Endothelial cell of umbilical vein (primary cell): ENCODE measurements at regions of chr3 and their contacts with region 1.

Region 1: GRCh38 chr3:179604321-179605078 is at the starts of genes MRPL47 and NDUFB5:
- DNase-seq: peak; percentile 97
- H3K4me3 ChIP-seq: peak within 1 kb of the TSS; percentile 59 to 94 (median 77)
- H3K27ac ChIP-seq: peak within 1 kb of the TSS; percentile 84
- H3K4me1 ChIP-seq: peaks cover 14% of the 10 kb centered on the region
- H3K27me3 ChIP-seq: no peaks in the 10 kb centered on the region
- CTCF ChIP-seq: no peak
- POLR2A ChIP-seq: peak; percentile 94
- total RNA-seq, gene MRPL47: 47.0 and 51.2 TPM in 2 replicates
- total RNA-seq, gene NDUFB5: 68.3 and 74.9 TPM in 2 replicates

Region 2: GRCh38 chr3:179347345-179348194 is 256.9 kb before region 1 on chr3 and contains the start of gene MFN1:
- CTCF ChIA-PET with region 1: no interaction called
- POLR2A ChIA-PET with region 1: no interaction called
- dilution Hi-C with region 1: no loop called
- intact Hi-C with region 1: loop called (anchors 1 kb)
- DNase-seq: peak; percentile 97
- H3K4me3 ChIP-seq: peak within 1 kb of the TSS; percentile 38 to 99 (median 79)
- H3K27ac ChIP-seq: peak within 1 kb of the TSS; percentile 19
- H3K4me1 ChIP-seq: peaks cover 9% of the 10 kb centered on the region
- H3K27me3 ChIP-seq: no peaks in the 10 kb centered on the region
- CTCF ChIP-seq: no peak
- POLR2A ChIP-seq: peak; percentile 92
- total RNA-seq, gene MFN1: 42.9 and 52.9 TPM in 2 replicates

Region 3: GRCh38 chr3:179589143-179589542 is 15.4 kb before region 1 on chr3:
- CTCF ChIA-PET with region 1: no interaction called
- POLR2A ChIA-PET with region 1: no interaction called
- dilution Hi-C with region 1: no loop called
- intact Hi-C with region 1: no loop called
- DNase-seq: peak; percentile 36
- H3K4me3 ChIP-seq: no peak overlapping the region
- H3K27ac ChIP-seq: no peak overlapping the region
- H3K4me1 ChIP-seq: no peaks in the 10 kb centered on the region
- H3K27me3 ChIP-seq: no peaks in the 10 kb centered on the region
- CTCF ChIP-seq: no peak
- POLR2A ChIP-seq: no peak